H1 (cell line): ENCODE measurements at regions of chr12 and their contacts with region 1.

Region 1: GRCh38 chr12:2682296-2683251 is 112.2 kb upstream of the FKBP4 start:
- DNase-seq: no peak
- H3K4me3 ChIP-seq: no peak overlapping the region
- H3K27ac ChIP-seq: no peak overlapping the region
- H3K4me1 ChIP-seq: peaks cover 0 to 7% (median 0%) of the 10 kb centered on the region in 4 experiments; a peak in 3 of 7 replicates
- H3K27me3 ChIP-seq: no peaks in the 10 kb centered on the region
- CTCF ChIP-seq: peak; percentile 59 to 67 (median 65)
- EP300 ChIP-seq: no peak
- POLR2A ChIP-seq: no peak
- RAD21 ChIP-seq: peak; percentile 69 to 80

Region 2: DNA sequence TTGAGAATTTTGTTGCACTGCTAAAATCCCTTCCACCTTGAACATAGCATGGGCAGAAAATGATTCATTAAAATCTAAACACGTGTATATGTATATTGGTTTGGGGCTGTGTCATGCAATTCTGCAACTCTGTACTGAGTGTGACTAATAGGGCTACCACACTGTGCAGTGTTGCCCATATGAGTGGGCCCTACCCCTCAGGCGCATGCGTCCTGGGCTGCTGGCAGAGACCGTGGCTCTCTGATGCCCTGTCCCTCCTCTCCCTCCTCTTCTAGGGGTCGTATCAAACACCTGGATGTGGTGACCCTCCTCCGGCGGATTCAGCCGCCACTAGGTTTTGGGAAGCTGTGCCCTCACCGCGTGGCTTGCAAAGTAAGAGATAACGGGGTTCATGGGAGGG is 16.2 kb before region 1 on chr12:
- CTCF ChIA-PET with region 1: interaction called, 11 read pairs
- POLR2A ChIA-PET with region 1: no interaction called
- DNase-seq: no peak
- H3K4me3 ChIP-seq: no peak overlapping the region
- H3K27ac ChIP-seq: no peak overlapping the region
- H3K4me1 ChIP-seq: no peaks in the 10 kb centered on the region
- H3K27me3 ChIP-seq: no peaks in the 10 kb centered on the region
- CTCF ChIP-seq: no peak
- EP300 ChIP-seq: no peak
- POLR2A ChIP-seq: no peak
- RAD21 ChIP-seq: no peak